K562 (cell line): ENCODE measurements at regions of chr10 and their contacts with region 1.

Region 1: DNA sequence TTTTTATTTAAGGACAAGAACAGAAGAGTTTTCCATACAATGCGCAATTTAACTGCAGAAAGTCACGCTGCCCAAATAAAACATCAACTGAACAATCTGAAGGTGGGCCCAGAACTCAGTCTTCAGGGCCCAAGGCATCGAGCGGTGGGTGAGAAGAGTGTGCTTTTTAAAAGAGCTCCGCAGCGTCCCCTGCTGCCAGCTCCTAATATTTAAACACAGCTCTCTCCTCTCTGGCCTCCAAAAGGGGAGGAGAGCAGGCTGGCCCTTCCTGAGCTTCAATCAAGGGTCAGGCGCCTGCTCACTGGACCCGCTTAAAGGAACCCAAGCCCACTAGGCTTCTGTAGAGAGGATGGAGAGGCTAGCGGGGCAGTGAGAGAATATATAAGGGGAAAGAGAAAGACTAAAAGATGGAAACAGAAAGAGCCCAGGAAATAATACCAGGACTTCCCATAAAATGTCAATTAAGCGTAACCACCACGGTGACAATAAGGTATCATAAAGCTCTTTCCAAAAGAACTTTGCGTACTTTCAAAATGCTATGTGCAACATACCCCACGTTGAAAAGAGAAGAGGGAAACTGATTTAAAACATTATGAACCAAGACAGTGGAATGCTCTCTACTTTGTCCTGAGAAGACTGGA is 2.8 kb downstream of the FAM53B start:
- DNase-seq: peak; percentile 68 to 85 (median 74)
- ATAC-seq: peak; percentile 80
- H3K4me3 ChIP-seq: no peak overlapping the region
- H3K27ac ChIP-seq: peak overlapping the region; percentile 43; the same call in 1 of the 3 replicates
- H3K4me1 ChIP-seq: peaks cover 29 to 33% of the 10 kb centered on the region in 2 experiments; a peak in 4 of 5 replicates
- H3K27me3 ChIP-seq: no peaks in the 10 kb centered on the region
- CTCF ChIP-seq: peak; percentile 76 to 86 (median 79)
- EP300 ChIP-seq: no peak
- POLR2A ChIP-seq: no peak
- RAD21 ChIP-seq: peak; percentile 70 to 75

Region 2: GRCh38 chr10:124539935-124540641 is 201.3 kb before region 1 on chr10:
- CTCF ChIA-PET with region 1: interaction called, 15 read pairs
- POLR2A ChIA-PET with region 1: interaction called, 3 read pairs
- in situ Hi-C with region 1: no loop called
- intact Hi-C with region 1: loop called (anchors 1 kb)
- DNase-seq: peak; percentile 61 to 79 (median 66)
- ATAC-seq: peak; percentile 96
- H3K4me3 ChIP-seq: no peak overlapping the region
- H3K27ac ChIP-seq: no peak overlapping the region
- H3K4me1 ChIP-seq: peaks cover 0 to 63% of the 10 kb centered on the region in 2 experiments; a peak in 2 of 5 replicates
- H3K27me3 ChIP-seq: peaks cover 0 to 17% of the 10 kb centered on the region in 2 experiments; a peak in 2 of 5 replicates
- CTCF ChIP-seq: peak; percentile 68 to 87 (median 74)
- EP300 ChIP-seq: no peak
- POLR2A ChIP-seq: no peak
- RAD21 ChIP-seq: peak; percentile 86 to 94

Region 3: DNA sequence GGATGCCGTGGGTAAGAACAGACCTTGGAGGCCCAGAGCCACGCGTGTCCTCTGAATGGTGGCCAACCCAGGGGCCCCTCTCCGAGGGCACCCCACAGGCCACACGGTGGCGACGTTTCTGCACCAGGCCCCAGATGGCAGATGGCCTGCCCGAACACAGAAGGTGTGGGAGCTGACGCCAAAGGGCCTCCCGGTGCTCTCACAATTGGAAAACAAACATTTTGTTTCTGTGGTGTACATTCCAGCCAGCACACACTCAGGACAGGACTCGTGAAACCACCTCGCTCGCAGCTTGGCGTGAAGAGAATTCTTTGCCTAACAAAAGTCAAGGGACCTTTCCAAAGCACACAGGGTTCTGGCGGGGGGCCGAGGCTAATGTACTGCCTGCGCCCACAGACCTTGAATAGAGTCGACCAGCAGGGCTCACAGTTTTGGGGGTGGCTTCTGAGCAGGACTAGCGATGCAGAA is 109.3 kb before region 1 on chr10:
- CTCF ChIA-PET with region 1: no interaction called
- POLR2A ChIA-PET with region 1: no interaction called
- in situ Hi-C with region 1: no loop called
- intact Hi-C with region 1: loop called (anchors 2 kb)
- DNase-seq: no peak
- ATAC-seq: peak; percentile 44
- H3K4me3 ChIP-seq: no peak overlapping the region
- H3K27ac ChIP-seq: no peak overlapping the region
- H3K4me1 ChIP-seq: peaks cover 13 to 47% of the 10 kb centered on the region in 2 experiments; a peak in 4 of 5 replicates
- H3K27me3 ChIP-seq: no peaks in the 10 kb centered on the region
- CTCF ChIP-seq: peak; percentile 22 to 41 (median 32); a peak in 4 of 6 replicates
- EP300 ChIP-seq: no peak
- POLR2A ChIP-seq: no peak
- RAD21 ChIP-seq: peak in 1 of 2 experiments; percentile 55; a peak in 3 of 4 replicates

Region 4: GRCh38 chr10:124655191-124656112 is 85.9 kb before region 1 on chr10:
- CTCF ChIA-PET with region 1: no interaction called
- POLR2A ChIA-PET with region 1: no interaction called
- in situ Hi-C with region 1: no loop called
- intact Hi-C with region 1: no loop called
- DNase-seq: no peak
- ATAC-seq: no peak
- H3K4me3 ChIP-seq: no peak overlapping the region
- H3K27ac ChIP-seq: no peak overlapping the region
- H3K4me1 ChIP-seq: peaks cover 0 to 12% of the 10 kb centered on the region in 2 experiments; a peak in 3 of 5 replicates
- H3K27me3 ChIP-seq: no peaks in the 10 kb centered on the region
- CTCF ChIP-seq: no peak
- EP300 ChIP-seq: no peak
- POLR2A ChIP-seq: no peak
- RAD21 ChIP-seq: no peak

Region 5: GRCh38 chr10:124671486-124672075 is 69.8 kb before region 1 on chr10:
- CTCF ChIA-PET with region 1: no interaction called
- POLR2A ChIA-PET with region 1: interaction called, 5 read pairs
- in situ Hi-C with region 1: no loop called
- intact Hi-C with region 1: loop called (anchors 5 kb)
- DNase-seq: peak; percentile 80 to 87 (median 86)
- ATAC-seq: peak; percentile 99
- H3K4me3 ChIP-seq: no peak overlapping the region
- H3K27ac ChIP-seq: 0 out of 3 replicates have a peak overlapping the region, but pooled peaks have one; percentile 28
- H3K4me1 ChIP-seq: peaks cover 22 to 49% of the 10 kb centered on the region in 2 experiments
- H3K27me3 ChIP-seq: no peaks in the 10 kb centered on the region
- CTCF ChIP-seq: peak; percentile 77 to 87 (median 82)
- EP300 ChIP-seq: no peak; the same call in 1 of the 2 replicates
- POLR2A ChIP-seq: no peak
- RAD21 ChIP-seq: peak; percentile 57 to 73; a peak in 3 of 4 replicates

Region 6: DNA sequence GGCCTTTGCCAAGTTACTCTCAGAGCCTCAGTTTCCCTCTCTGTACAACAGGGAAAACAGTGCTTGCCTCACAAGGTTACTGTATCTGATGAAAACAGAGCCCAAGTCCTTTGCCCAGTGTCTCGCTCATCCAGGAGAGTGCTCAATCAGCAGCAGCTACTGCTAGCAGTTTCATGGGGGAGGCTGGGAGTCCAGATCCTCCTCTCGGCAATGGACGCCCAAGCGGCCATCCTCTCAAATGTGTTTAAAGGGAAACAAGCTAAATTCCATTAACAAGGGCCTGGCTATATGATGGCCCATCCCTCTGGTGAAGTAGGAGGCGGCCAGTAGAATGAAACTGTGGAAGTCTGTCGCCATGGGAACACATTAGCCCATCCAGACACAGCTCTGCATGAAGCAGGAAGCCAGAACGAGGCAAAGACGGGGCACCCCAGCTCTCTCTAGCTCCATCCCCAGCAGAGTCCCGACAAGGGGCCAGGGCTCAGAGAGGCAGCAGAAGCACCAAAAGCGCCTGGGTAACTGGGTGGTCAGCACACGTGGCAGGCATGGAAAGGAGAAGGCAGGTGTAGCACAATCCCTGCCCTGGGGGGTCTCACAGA is 32.4 kb before region 1 on chr10:
- CTCF ChIA-PET with region 1: interaction called, 3 read pairs
- POLR2A ChIA-PET with region 1: interaction called, 3 read pairs
- in situ Hi-C with region 1: no loop called
- intact Hi-C with region 1: loop called (anchors 2 kb)
- DNase-seq: no peak
- ATAC-seq: no peak
- H3K4me3 ChIP-seq: no peak overlapping the region
- H3K27ac ChIP-seq: no peak overlapping the region
- H3K4me1 ChIP-seq: peaks cover 2 to 20% of the 10 kb centered on the region in 2 experiments; a peak in 3 of 5 replicates
- H3K27me3 ChIP-seq: no peaks in the 10 kb centered on the region
- CTCF ChIP-seq: no peak
- EP300 ChIP-seq: no peak
- POLR2A ChIP-seq: no peak
- RAD21 ChIP-seq: no peak

Region 7: GRCh38 chr10:124756156-124756903 is 14.9 kb after region 1 on chr10:
- CTCF ChIA-PET with region 1: interaction called, 3 read pairs
- POLR2A ChIA-PET with region 1: interaction called, 10 read pairs
- in situ Hi-C with region 1: no loop called
- intact Hi-C with region 1: no loop called
- DNase-seq: no peak
- ATAC-seq: no peak
- H3K4me3 ChIP-seq: no peak overlapping the region
- H3K27ac ChIP-seq: no peak overlapping the region
- H3K4me1 ChIP-seq: no peaks in the 10 kb centered on the region
- H3K27me3 ChIP-seq: no peaks in the 10 kb centered on the region
- CTCF ChIP-seq: no peak
- EP300 ChIP-seq: no peak
- POLR2A ChIP-seq: no peak
- RAD21 ChIP-seq: no peak

Region 8: GRCh38 chr10:124975977-124976514 is 234.6 kb after region 1 on chr10:
- CTCF ChIA-PET with region 1: no interaction called
- POLR2A ChIA-PET with region 1: no interaction called
- in situ Hi-C with region 1: no loop called
- intact Hi-C with region 1: no loop called
- DNase-seq: no peak
- ATAC-seq: no peak
- H3K4me3 ChIP-seq: no peak overlapping the region
- H3K27ac ChIP-seq: no peak overlapping the region
- H3K4me1 ChIP-seq: no peaks in the 10 kb centered on the region
- H3K27me3 ChIP-seq: no peaks in the 10 kb centered on the region
- CTCF ChIP-seq: no peak
- EP300 ChIP-seq: no peak
- POLR2A ChIP-seq: no peak
- RAD21 ChIP-seq: no peak

Region 9: GRCh38 chr10:125048101-125048864 is 306.9 kb after region 1 on chr10:
- CTCF ChIA-PET with region 1: no interaction called
- POLR2A ChIA-PET with region 1: no interaction called
- in situ Hi-C with region 1: loop called (anchors 10 kb)
- intact Hi-C with region 1: no loop called
- DNase-seq: peak; percentile 78 to 90 (median 82)
- ATAC-seq: peak; percentile 88
- H3K4me3 ChIP-seq: no peak overlapping the region
- H3K27ac ChIP-seq: peak overlapping the region; percentile 20; the same call in 1 of the 3 replicates
- H3K4me1 ChIP-seq: peaks cover 41 to 60% of the 10 kb centered on the region in 2 experiments; a peak in 4 of 5 replicates
- H3K27me3 ChIP-seq: no peaks in the 10 kb centered on the region
- CTCF ChIP-seq: peak; percentile 86 to 93 (median 91)
- EP300 ChIP-seq: no peak
- POLR2A ChIP-seq: no peak
- RAD21 ChIP-seq: peak; percentile 73 to 86